Endothelial cell of umbilical vein (primary cell): ENCODE measurements at regions of chr12 and their contacts with region 1.

Region 1: DNA sequence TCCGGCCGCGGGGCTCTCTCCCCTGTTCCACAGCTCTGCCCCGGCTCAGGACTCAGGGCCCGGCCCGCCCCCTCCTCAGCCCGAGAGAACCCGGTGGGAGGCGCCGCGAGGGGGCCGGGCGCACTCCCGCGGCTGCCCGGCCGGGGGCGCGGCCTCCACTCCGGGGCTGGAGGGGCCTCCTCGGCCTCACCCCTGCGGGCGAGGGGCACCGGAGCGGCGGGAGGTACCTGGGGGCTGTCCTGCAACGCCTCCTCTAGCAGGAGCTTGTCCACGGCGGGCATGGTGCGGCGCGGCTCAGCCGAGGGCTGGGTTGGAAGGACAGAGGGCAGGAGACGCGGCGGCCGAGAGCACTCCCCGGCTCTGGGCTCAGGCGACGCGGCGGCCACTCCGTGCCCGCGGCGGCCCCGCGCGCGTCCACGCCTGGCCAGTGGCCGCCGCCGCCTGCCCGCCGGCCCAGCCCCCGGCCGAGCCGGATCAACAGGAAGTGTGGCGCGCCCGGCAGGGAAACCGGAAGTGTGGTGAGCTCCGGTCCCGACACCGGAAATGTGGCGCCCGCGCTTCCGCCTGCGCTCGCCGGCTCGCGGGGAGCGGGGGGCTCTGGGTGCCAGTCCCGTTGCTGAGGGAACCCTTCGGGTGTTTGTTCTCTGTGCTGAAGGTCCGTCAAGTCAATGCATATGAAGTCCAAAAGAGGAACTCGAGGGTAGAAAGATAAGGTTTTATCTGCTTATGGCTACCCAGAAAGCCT is at the start of gene APPL2:
- DNase-seq: peak; percentile 87
- H3K4me3 ChIP-seq: peak within 1 kb of the TSS; percentile 55 to 98 (median 96)
- H3K27ac ChIP-seq: peak within 1 kb of the TSS; percentile 95
- H3K4me1 ChIP-seq: peaks cover 28% of the 10 kb centered on the region
- H3K27me3 ChIP-seq: no peaks in the 10 kb centered on the region
- CTCF ChIP-seq: peak; percentile 19 to 23
- POLR2A ChIP-seq: peak; percentile 87
- total RNA-seq, gene APPL2: 21.4 and 31.8 TPM in 2 replicates

Region 2: DNA sequence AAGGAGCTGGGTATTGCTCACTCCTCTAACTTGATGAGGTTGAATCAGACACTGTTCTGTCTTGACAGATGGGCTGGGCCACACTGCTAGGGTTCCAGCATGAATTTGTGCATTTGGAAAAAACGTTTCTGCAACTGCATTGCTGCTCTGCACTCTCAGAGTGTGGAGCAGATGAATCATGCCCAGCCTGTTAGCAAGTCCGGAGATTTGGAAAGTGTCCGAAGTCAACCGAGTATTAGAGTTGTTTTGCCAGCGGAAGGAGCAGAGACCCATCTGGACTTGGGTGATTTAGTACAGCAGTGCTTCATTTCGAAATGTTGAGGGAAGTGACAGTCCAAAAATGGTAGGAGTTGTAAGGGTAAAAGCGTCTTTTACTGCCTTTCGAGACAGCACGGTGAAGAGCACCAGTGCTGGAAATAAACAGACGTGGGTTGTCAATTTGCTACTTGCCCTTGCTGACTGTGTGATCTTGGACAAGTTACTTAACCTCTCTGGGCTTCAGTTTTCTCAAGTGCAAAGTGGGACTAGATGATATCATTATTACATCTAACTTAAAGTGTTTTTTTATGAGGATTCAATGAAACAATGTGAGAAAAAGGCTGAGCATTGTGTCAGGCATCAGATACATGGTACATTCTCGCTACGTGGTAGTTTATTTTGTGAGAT is 639.6 kb before region 1 on chr12:
- CTCF ChIA-PET with region 1: no interaction called
- POLR2A ChIA-PET with region 1: no interaction called
- dilution Hi-C with region 1: no loop called
- intact Hi-C with region 1: no loop called
- DNase-seq: no peak
- H3K4me3 ChIP-seq: no peak overlapping the region
- H3K27ac ChIP-seq: no peak overlapping the region
- H3K4me1 ChIP-seq: no peaks in the 10 kb centered on the region
- H3K27me3 ChIP-seq: no peaks in the 10 kb centered on the region
- CTCF ChIP-seq: no peak
- POLR2A ChIP-seq: no peak

Region 3: GRCh38 chr12:104763168-104763805 is 472.6 kb before region 1 on chr12:
- CTCF ChIA-PET with region 1: no interaction called
- POLR2A ChIA-PET with region 1: no interaction called
- dilution Hi-C with region 1: no loop called
- intact Hi-C with region 1: no loop called
- DNase-seq: no peak
- H3K4me3 ChIP-seq: no peak overlapping the region
- H3K27ac ChIP-seq: no peak overlapping the region
- H3K4me1 ChIP-seq: no peaks in the 10 kb centered on the region
- H3K27me3 ChIP-seq: peaks cover 0 to 2% of the 10 kb centered on the region in 2 experiments
- CTCF ChIP-seq: no peak
- POLR2A ChIP-seq: no peak

Region 4: GRCh38 chr12:104930388-104931326 is 305.2 kb before region 1 on chr12:
- CTCF ChIA-PET with region 1: no interaction called
- POLR2A ChIA-PET with region 1: no interaction called
- dilution Hi-C with region 1: no loop called
- intact Hi-C with region 1: no loop called
- DNase-seq: peak; percentile 30
- H3K4me3 ChIP-seq: no peak overlapping the region
- H3K27ac ChIP-seq: no peak overlapping the region
- H3K4me1 ChIP-seq: no peaks in the 10 kb centered on the region
- H3K27me3 ChIP-seq: no peaks in the 10 kb centered on the region
- CTCF ChIP-seq: no peak
- POLR2A ChIP-seq: no peak

Region 5: DNA sequence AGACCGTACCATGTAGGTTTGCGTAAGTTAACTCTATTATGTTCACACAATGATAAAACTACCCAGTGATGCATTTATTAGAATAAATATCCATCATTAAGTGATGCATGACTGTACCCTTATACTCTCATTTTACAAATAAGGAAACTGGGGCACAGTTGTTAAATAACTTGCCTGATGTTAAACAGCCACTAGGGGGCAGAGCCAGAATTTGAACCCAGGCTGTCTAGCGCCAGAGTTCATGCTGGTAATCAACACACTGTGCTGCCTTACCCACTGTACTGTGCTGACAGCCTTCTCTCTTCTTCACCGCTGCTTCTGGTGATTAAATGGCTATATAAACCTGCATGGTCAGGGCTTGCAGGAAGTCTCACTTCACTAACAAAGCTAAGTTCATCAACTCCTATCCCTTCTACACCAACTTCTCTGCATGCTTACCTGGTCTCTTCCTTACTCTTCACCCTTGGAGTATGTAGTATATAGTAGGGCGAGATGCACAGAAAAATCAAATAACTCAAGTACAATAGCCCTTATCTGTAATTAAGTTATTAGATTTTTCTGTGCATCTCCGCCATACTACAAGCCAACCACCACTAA is 43.7 kb after region 1 on chr12:
- CTCF ChIA-PET with region 1: interaction called, 5 read pairs
- POLR2A ChIA-PET with region 1: no interaction called
- dilution Hi-C with region 1: no loop called
- intact Hi-C with region 1: loop called (anchors 5 kb)
- DNase-seq: peak; percentile 53
- H3K4me3 ChIP-seq: no peak overlapping the region
- H3K27ac ChIP-seq: no peak overlapping the region
- H3K4me1 ChIP-seq: peaks cover 9% of the 10 kb centered on the region
- H3K27me3 ChIP-seq: no peaks in the 10 kb centered on the region
- CTCF ChIP-seq: peak; percentile 60 to 66
- POLR2A ChIP-seq: no peak

Region 6: GRCh38 chr12:105330283-105330930 is 94.5 kb after region 1 on chr12 and contains the start of gene C12orf75:
- CTCF ChIA-PET with region 1: interaction called, 5 read pairs
- POLR2A ChIA-PET with region 1: interaction called, 3 read pairs
- dilution Hi-C with region 1: no loop called
- intact Hi-C with region 1: loop called (anchors 1 kb)
- DNase-seq: peak; percentile 71
- H3K4me3 ChIP-seq: peak within 1 kb of the TSS; percentile 59 to 88 (median 83)
- H3K27ac ChIP-seq: no peak within 1 kb of the TSS
- H3K4me1 ChIP-seq: peaks cover 39% of the 10 kb centered on the region
- H3K27me3 ChIP-seq: no peaks in the 10 kb centered on the region
- CTCF ChIP-seq: no peak
- POLR2A ChIP-seq: no peak
- total RNA-seq, gene C12orf75: 60.7 and 73.6 TPM in 2 replicates

Region 7: GRCh38 chr12:105445249-105446015 is 209.5 kb after region 1 on chr12:
- CTCF ChIA-PET with region 1: no interaction called
- POLR2A ChIA-PET with region 1: no interaction called
- dilution Hi-C with region 1: no loop called
- intact Hi-C with region 1: no loop called
- DNase-seq: peak; percentile 98
- H3K4me3 ChIP-seq: no peak overlapping the region
- H3K27ac ChIP-seq: peak overlapping the region; percentile 98
- H3K4me1 ChIP-seq: peaks cover 29% of the 10 kb centered on the region
- H3K27me3 ChIP-seq: no peaks in the 10 kb centered on the region
- CTCF ChIP-seq: no peak
- POLR2A ChIP-seq: peak; percentile 86